ENCODE measurements at regions of chr5 and their contacts with region 1.

Region 1: GRCh38 chr5:72244862-72245371 is 75.1 kb downstream of the MRPS27 start:
- DNase-seq: peak; percentile 49
- ATAC-seq: peak; percentile 36
- H3K4me3 ChIP-seq: no peak overlapping the region
- H3K27ac ChIP-seq: no peak overlapping the region
- H3K4me1 ChIP-seq: peaks cover 42% of the 10 kb centered on the region
- H3K27me3 ChIP-seq: no peaks in the 10 kb centered on the region
- CTCF ChIP-seq: peak; percentile 62

Region 2: DNA sequence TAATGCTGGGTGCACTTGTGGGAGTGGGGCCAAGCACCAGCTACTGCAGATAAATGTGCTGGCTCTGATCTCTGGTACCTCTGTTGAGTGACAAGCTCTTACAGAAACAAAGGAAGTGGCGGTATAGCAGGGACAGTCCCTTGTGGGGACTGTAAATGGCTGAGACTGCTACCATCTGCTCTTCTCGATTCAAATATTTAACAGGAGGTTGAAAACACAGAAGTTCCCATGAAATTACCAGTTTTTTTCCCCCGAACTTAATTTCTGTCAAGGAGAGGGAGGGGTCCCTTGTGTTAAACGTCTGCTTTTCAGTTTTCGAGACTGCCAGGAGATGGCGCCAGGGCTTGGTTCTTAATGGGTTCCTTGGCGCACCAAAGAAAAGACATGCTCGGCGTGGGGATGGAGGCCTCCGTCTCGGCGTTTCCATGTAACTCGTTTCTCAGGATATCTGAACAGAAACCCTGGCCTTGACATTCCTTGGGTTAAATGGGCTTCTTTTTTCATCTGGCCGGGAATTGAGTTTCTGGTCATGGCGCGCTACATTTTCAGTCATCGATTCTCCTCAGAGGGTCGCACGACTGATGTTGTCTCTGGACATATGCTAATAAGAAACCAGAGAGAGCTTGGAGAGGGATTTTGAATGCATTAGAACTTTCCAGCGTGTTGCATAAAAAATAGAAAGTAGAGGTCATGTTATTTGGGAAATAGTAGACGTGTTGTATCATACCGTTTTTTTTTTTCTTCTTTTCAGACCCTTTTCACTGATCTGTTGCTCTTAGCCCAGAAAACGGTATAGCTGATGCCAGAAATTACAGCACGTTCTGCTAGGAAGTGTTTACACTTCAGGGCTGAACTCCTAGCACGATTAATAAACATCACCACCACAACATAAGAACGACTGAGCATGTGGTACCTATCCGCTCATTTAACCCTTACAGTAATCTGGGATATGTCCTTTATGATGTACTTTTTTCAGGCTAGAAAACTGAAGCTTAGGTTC is 461.8 kb before region 1 on chr5:
- CTCF ChIA-PET with region 1: no interaction called
- POLR2A ChIA-PET with region 1: no interaction called
- intact Hi-C with region 1: loop called (anchors 5 kb)
- DNase-seq: peak; percentile 81
- ATAC-seq: peak; percentile 81
- H3K4me3 ChIP-seq: peak overlapping the region; percentile 63
- H3K27ac ChIP-seq: no peak overlapping the region
- H3K4me1 ChIP-seq: peaks cover 5% of the 10 kb centered on the region; the same call in 1 of the 2 replicates
- H3K27me3 ChIP-seq: no peaks in the 10 kb centered on the region
- CTCF ChIP-seq: peak; percentile 85

Region 3: GRCh38 chr5:72138943-72139521 is 105.9 kb before region 1 on chr5:
- CTCF ChIA-PET with region 1: interaction called, 3 read pairs
- POLR2A ChIA-PET with region 1: no interaction called
- intact Hi-C with region 1: loop called (anchors 10 kb)
- DNase-seq: peak; percentile 88
- ATAC-seq: peak; percentile 68
- H3K4me3 ChIP-seq: peak overlapping the region; percentile 42
- H3K27ac ChIP-seq: peak overlapping the region; percentile 86
- H3K4me1 ChIP-seq: peaks cover 67% of the 10 kb centered on the region
- H3K27me3 ChIP-seq: no peaks in the 10 kb centered on the region
- CTCF ChIP-seq: no peak

Region 4: GRCh38 chr5:72268753-72269410 is 24.0 kb after region 1 on chr5:
- CTCF ChIA-PET with region 1: interaction called, 3 read pairs
- POLR2A ChIA-PET with region 1: interaction called, 5 read pairs
- intact Hi-C with region 1: loop called (anchors 1 kb)
- DNase-seq: peak; percentile 70
- ATAC-seq: no peak
- H3K4me3 ChIP-seq: no peak overlapping the region
- H3K27ac ChIP-seq: no peak overlapping the region
- H3K4me1 ChIP-seq: peaks cover 6% of the 10 kb centered on the region
- H3K27me3 ChIP-seq: no peaks in the 10 kb centered on the region
- CTCF ChIP-seq: peak; percentile 75

Region 5: DNA sequence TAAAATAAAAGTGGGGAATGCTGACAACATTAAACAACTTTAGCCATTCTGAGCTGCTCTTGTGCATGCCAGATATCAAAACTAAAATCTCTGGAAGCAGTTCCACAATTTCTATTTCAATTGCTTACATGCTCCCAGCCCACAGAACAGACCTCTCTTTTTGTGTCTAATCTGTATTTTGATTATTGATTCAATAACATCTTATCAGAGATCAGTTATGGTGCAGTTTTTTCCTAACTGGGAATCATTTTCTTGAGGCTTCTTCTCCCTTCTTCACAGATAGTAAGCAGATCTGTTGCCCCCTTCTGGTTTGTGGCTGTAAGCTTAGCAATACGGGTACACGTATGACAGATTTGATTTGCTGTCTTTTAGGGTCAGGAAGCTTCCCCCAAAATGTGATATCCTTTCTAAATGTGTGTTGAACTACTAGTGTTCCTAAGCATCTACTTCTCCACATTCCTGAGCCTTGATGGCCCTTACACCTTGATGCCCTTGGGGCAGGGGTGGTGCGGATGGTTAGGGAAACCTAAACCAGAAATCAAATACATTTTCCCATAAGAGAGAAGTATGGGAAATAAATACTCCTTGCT is 35.8 kb after region 1 on chr5:
- CTCF ChIA-PET with region 1: interaction called, 6 read pairs
- POLR2A ChIA-PET with region 1: no interaction called
- intact Hi-C with region 1: loop called (anchors 5 kb)
- DNase-seq: peak; percentile 47
- ATAC-seq: peak; percentile 69
- H3K4me3 ChIP-seq: no peak overlapping the region
- H3K27ac ChIP-seq: no peak overlapping the region
- H3K4me1 ChIP-seq: no peaks in the 10 kb centered on the region
- H3K27me3 ChIP-seq: no peaks in the 10 kb centered on the region
- CTCF ChIP-seq: peak; percentile 64

Region 6: DNA sequence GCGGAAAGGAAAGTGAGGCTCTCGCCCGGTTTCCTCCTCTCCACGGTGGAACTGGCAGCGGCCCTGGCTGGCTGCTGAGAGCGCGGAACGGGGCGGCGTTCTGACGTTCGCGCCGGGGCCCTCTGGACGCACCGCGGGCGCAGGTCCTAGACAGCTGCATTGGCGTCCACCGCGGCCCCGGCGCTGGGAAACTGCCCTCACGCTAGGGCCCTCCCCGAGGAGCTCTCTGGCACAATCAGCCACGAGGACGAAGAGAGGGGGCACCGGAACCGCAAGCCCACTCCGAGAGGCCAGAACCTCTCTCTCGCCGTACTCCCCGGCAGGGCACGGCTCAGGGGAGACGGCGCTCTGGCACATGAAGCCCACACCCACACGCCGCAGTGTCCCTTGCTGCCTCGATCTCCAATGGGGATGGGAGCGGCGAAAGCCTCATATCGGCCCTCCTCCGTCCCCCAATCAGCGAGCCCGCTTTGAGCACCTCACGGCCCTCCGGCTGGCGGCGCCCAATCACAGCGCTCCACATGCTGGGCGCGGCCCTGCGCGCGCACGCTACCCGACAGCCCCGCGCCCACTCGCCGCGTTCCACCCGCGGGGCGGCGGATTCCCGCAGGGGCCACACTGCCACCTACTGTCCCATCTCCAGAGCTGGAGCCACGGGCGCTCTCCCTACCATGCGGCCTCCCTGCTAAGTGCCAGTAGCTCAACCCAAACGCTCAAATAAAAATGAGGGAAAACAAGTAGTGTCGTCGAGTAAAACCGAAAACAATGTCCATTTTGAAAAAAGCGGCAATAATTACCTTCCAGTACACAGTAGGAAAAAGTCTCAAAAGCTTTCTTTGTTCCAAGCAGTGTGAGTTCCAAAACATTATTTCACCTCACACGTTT is 63.3 kb after region 1 on chr5:
- CTCF ChIA-PET with region 1: interaction called, 5 read pairs
- POLR2A ChIA-PET with region 1: interaction called, 6 read pairs
- intact Hi-C with region 1: loop called (anchors 2 kb)
- DNase-seq: peak; percentile 95
- ATAC-seq: peak; percentile 98
- H3K4me3 ChIP-seq: peak overlapping the region; percentile 79
- H3K27ac ChIP-seq: peak overlapping the region; percentile 91
- H3K4me1 ChIP-seq: peaks cover 9% of the 10 kb centered on the region
- H3K27me3 ChIP-seq: no peaks in the 10 kb centered on the region
- CTCF ChIP-seq: peak; percentile 78

Region 7: DNA sequence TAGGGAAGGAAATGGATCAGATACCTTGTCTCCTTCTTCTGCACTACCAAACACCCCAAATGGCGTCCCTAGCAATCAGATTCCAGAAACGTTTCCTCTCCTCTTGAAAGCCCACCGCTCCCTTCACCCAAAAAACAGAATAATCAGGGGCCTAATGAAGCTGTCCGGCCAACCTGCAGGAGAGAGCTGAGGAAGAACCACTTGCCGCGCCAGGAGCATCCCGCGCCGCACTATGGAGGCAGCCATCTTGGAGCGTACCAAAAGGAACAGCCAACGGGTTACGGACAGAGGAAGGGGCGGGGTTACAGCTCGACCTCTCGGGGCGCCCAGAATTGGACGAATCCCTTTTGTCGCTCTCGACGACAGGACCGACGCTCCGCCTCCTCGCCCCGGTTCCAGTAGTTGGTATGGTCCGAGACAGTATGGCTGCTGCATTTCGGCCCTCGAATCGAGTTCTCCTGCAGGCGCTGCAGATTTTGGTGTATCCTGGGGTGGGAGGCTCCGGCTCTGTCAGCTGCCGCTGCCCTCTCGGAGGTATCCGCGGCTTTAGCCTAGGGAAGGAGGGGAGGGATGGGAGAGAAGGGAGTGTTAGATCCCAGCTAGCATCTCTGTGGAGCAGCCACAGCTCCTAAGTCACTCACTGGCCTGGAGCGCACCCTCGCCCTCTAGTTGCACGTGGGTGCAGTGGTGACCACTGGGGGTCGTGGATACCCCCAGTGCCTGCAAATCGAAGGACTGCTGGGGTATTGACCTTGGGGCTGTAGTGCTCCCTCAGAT is 75.2 kb after region 1 on chr5 and contains the starts of genes MRPS27 and PTCD2:
- CTCF ChIA-PET with region 1: no interaction called
- POLR2A ChIA-PET with region 1: interaction called, 10 read pairs
- intact Hi-C with region 1: no loop called
- DNase-seq: peak; percentile 94
- ATAC-seq: peak; percentile 96
- H3K4me3 ChIP-seq: peak within 1 kb of the TSS; percentile 90
- H3K27ac ChIP-seq: peak within 1 kb of the TSS; percentile 62
- H3K4me1 ChIP-seq: peaks cover 33% of the 10 kb centered on the region
- H3K27me3 ChIP-seq: no peaks in the 10 kb centered on the region
- CTCF ChIP-seq: no peak
- total RNA-seq, gene MRPS27: 48.6 and 59.0 TPM in 2 replicates
- total RNA-seq, gene PTCD2: 3.4 and 6.0 TPM in 2 replicates

Region 8: GRCh38 chr5:72412283-72413055 is 167.6 kb after region 1 on chr5:
- CTCF ChIA-PET with region 1: no interaction called
- POLR2A ChIA-PET with region 1: no interaction called
- intact Hi-C with region 1: no loop called
- DNase-seq: peak; percentile 2
- ATAC-seq: no peak
- H3K4me3 ChIP-seq: no peak overlapping the region
- H3K27ac ChIP-seq: no peak overlapping the region
- H3K4me1 ChIP-seq: no peaks in the 10 kb centered on the region
- H3K27me3 ChIP-seq: no peaks in the 10 kb centered on the region
- CTCF ChIP-seq: no peak